ENCODE measurements at regions of chr5 and their contacts with region 1.

Region 1: DNA sequence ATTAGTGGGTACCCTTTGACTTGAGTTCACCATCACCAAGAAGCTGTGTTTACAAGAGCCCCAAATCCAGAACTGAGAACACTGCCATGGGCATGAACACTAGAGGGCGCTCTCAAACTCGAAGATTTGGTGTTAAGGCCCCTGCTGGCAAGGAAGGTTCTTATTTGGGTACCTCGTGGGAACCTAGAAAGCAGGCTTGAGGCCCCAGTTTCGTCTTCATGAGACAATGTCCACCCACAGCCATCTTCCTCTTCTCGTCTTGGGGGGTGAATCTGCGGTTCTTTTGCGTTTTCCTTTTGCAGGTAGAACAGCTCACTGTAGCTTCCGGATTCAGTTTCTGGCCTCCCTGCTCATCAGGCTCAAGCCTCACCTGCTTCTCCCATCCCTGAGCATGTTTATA is 184.0 kb downstream of the SEMA5A start:
- DNase-seq: peak; percentile 33 to 79 (median 56)
- H3K4me3 ChIP-seq: no peak overlapping the region
- H3K27ac ChIP-seq: no peak overlapping the region
- H3K4me1 ChIP-seq: no peaks in the 10 kb centered on the region
- H3K27me3 ChIP-seq: no peaks in the 10 kb centered on the region
- CTCF ChIP-seq: peak; percentile 52 to 73 (median 67)
- POLR2A ChIP-seq: no peak

Region 2: DNA sequence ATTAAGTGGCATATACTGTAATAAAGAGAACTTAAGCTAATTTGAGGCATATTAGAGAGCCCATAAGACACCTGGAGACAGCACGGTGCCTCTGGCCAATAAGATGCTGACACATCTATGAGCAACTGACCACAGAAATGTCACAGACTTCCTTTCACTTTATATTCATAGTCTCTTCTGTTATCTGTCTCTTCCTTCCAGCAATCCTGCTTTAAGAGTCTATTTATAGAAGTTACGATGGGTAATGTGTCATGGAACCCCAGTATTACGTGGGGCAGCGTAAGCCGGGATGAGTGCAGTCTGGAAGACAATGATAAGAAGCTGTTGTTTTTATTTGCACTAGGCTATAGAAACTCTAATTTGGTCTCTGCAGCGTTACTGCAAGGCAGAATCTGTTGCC is 1647.7 kb before region 1 on chr5:
- intact Hi-C with region 1: no loop called
- DNase-seq: no peak
- H3K4me3 ChIP-seq: no peak overlapping the region
- H3K27ac ChIP-seq: no peak overlapping the region
- H3K4me1 ChIP-seq: no peaks in the 10 kb centered on the region
- H3K27me3 ChIP-seq: no peaks in the 10 kb centered on the region
- CTCF ChIP-seq: no peak
- POLR2A ChIP-seq: no peak

Region 3: DNA sequence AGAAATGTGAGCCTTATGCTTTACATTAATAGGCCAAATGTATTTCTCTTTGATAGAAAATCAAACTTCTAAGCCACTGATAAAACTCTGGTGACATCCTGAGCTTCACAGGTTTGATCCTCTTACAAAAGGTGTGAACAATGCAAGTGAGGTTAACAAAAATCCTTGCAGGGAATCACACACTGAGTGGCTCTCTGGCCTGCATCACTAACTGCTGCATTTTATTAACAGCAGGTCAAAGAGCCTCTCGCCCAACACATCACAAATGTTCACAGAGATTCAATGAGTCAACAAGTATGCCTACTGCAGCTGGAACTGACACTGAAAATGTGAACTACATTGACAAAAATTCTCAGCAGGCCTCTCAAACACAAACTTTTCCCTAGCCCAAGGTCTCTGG is 61.7 kb after region 1 on chr5:
- intact Hi-C with region 1: no loop called
- DNase-seq: no peak
- H3K4me3 ChIP-seq: no peak overlapping the region
- H3K27ac ChIP-seq: no peak overlapping the region
- H3K4me1 ChIP-seq: peaks cover 0 to 5% of the 10 kb centered on the region in 2 donors
- H3K27me3 ChIP-seq: no peaks in the 10 kb centered on the region
- CTCF ChIP-seq: no peak
- POLR2A ChIP-seq: no peak

Region 4: DNA sequence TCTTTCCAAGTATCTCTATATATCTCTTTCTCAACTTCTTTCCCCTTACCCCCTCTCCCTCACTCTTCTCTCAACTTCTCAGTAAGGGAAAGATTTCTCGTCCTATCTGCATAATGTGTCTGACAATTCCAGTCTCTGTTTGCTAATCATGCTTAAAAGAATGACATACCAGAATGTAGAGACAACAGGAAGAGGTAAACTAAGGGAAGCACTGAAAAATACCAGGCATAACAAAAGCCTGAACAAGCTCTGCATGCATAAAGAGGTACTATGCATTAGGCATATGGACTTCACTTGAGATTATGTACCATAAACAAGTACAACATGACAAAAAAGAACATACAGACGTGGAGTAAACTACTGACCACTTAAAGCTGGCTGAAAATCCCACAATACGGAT is 121.4 kb after region 1 on chr5:
- intact Hi-C with region 1: no loop called
- DNase-seq: no peak
- H3K4me3 ChIP-seq: no peak overlapping the region
- H3K27ac ChIP-seq: no peak overlapping the region
- H3K4me1 ChIP-seq: no peaks in the 10 kb centered on the region
- H3K27me3 ChIP-seq: no peaks in the 10 kb centered on the region
- CTCF ChIP-seq: no peak
- POLR2A ChIP-seq: no peak

Region 5: DNA sequence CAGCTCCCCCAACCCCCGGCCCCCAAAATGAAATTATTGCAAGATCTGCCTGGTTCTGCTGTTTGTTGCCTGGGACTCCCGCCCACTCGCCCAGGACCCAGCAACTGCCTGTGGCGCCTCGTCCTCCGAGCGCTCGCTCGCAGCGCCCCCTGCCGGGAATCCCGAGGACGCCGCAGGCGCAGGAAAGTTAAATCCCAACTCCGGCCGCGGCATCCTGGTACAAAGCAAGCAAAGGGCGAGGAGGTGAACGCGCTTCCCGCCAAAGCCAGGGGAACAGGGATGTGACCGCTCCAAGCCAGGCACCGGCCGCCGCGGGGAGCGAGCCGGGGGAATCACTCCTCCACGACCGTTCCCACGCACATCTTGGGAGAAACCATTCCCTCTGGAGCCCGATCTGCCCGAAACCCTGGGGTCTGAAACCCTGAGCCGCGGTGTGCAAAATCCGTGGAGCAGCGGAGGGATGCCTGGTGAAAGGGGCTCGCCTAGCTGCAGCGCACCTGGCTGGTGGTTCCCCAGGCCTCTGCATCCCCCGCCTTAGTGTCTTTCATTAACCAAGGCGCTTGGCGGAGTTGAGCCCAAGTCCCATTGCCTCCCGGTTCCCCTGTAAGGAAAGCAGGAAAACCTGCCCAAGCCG is 182.8 kb after region 1 on chr5:
- intact Hi-C with region 1: loop called (anchors 5 to 10 kb)
- DNase-seq: peak; percentile 69 to 91 (median 76)
- H3K4me3 ChIP-seq: peak overlapping the region in 2 of 4 donors; percentile 3 to 86
- H3K27ac ChIP-seq: peak overlapping the region in 1 of 5 donors; percentile 49
- H3K4me1 ChIP-seq: peaks cover 13 to 23% of the 10 kb centered on the region in 2 donors
- H3K27me3 ChIP-seq: no peaks in the 10 kb centered on the region
- CTCF ChIP-seq: peak; percentile 58 to 94 (median 84)
- POLR2A ChIP-seq: no peak

Region 6: DNA sequence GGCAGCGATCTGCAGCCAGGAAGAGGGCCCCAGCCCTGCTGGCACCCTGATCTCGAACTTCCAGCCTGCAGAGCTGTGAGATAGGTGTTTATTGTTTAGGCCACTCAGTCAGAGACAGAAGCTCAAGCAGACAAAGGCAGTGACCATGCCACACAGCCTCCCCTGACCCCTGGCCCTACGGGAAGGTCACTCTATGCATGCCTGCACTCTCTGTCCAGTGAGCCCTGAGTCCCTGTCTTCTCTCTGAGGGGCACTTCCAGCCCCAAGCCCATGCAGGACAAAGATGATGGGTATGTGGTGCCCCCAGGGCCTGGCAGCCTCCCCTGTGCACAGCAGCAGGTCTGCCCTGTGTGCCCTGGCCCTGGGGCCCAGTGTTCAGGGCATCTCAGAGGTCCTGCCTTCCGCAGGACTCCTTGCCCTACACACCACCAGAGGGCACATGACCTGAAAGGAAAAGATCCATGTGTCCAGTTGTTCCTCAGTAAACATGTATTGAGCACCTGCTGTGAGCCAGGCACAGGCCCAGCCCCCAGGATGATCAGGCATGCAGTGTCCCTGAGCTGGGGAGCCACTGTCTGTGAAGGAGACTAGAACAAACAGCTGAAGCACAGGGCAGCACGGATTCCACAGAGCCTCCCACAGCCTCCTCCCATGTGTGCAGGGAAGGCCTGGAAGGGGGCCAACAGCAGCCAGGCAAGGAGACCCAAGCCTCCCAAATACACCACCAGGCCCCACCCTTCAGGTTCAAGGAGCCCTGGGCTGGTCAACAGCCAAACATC is 778.5 kb after region 1 on chr5:
- intact Hi-C with region 1: loop called in 1 of 2 experiments (anchors 5 kb)
- DNase-seq: no peak
- H3K4me3 ChIP-seq: no peak overlapping the region
- H3K27ac ChIP-seq: no peak overlapping the region
- H3K4me1 ChIP-seq: no peaks in the 10 kb centered on the region
- H3K27me3 ChIP-seq: no peaks in the 10 kb centered on the region
- CTCF ChIP-seq: no peak
- POLR2A ChIP-seq: no peak